GM13976 (cell line): ENCODE measurements at regions of chr10 and their contacts with region 1.

Region 1: DNA sequence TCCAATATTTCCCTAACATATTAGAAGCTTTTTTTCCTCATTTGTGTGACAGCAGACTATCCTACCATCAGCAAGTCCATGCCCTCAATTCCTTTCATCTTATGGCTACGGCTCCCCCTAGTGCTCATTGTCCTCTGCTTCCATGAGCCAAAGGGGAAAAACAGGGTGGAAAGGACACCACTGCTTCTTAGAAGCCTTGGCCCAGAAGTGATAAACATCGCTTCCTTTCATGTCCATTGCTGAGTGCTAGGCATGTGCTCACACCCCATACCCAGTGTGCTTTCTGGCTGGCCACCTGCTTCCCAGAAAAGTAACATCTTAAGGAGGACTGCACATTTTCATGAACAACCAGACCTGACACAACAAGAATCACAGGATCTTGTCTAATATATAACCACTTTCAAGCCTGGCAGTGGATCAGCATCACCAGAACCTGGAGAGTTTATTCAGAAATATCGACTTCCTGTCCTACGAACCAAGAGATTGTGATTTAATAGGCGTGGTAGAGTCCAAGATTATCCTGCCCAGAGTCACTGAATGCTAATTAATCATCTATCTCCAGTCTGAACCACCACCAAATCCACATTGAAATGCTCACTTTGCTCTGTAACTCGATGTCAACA is 650.5 kb upstream of the SORCS1 start:
- DNase-seq: peak; percentile 33
- CTCF ChIP-seq: peak; percentile 54

Region 2: GRCh38 chr10:107409522-107409921 is 405.5 kb before region 1 on chr10:
- in situ Hi-C with region 1: loop called (anchors 25 kb)
- DNase-seq: no peak
- CTCF ChIP-seq: peak; percentile 18